ENCODE measurements at regions of chr12 and their contacts with region 1.

Region 1: DNA sequence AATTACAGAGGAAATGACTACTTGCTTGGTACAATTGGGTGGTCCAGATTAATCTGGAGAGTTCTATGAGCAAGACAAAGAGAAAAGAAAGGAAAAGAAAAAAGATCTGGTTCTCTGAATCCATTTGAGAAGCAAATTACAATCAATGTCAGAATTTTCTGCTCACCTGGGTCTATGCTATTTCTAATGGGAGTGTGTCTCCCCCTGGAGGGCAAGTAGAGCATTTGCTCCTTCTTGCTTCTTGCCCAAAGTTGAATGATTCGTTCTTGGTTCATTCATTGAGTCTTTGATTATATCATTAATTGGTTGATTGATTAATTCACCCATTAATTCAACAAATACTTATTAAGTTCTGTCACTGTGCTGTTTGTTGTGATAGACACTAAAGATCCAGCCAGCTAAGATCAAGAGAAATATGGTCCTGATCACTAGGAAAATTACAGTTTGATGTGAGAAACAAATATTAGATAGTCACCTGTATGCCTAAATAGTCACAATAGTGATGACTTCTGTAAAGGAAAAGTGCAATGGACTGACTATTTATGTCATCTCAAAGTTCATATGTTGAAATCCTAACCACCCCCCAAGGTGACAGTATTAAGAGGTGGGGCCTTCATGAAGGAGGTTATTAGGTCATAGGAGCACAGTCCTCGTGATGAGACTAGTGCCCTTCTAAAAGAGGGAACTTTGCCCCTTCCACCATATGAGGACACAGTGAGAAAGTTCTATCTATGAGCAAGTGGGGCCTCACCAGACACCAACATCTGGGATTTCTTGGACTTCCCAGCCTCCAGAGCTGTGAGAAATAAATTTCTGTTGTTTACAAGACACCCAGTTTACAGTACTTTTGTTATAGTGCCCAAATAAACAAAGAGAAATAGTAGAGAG is 8.0 kb upstream of the ASB8 start:
- DNase-seq: peak; percentile 73
- ATAC-seq: peak; percentile 79
- H3K4me3 Mint-ChIP-seq: no peak overlapping the region
- H3K27ac Mint-ChIP-seq: no peak overlapping the region
- H3K4me1 Mint-ChIP-seq: peaks cover 9% of the 10 kb centered on the region
- H3K27me3 Mint-ChIP-seq: peaks cover 21% of the 10 kb centered on the region

Region 2: GRCh38 chr12:47753034-47754001 is 412.0 kb before region 1 on chr12:
- CTCF ChIA-PET with region 1: no interaction called
- POLR2A ChIA-PET with region 1: no interaction called
- DNase-seq: no peak
- ATAC-seq: no peak
- H3K4me3 Mint-ChIP-seq: no peak overlapping the region
- H3K27ac Mint-ChIP-seq: no peak overlapping the region
- H3K4me1 Mint-ChIP-seq: peaks cover 28% of the 10 kb centered on the region
- H3K27me3 Mint-ChIP-seq: peaks cover 8% of the 10 kb centered on the region

Region 3: DNA sequence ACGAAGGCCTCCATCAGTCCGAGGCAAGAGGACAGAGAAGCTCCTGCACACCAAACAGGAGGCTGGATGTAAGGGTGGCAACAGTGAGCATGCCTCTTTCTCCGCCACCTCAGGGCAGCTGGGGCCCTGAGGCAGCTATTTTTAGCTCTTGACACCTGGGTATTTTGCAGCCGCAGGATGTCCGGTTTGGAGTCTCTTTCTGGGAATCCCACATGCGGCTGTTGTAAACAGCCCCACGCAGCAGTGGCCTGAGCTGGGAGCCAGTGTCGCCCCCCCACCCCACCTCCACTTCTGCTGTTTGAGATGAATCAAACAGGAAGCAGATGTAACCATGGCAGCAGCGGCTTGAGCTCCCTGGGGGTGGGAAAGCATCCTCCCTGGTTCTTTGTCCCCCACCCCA is 357.3 kb before region 1 on chr12:
- CTCF ChIA-PET with region 1: no interaction called
- POLR2A ChIA-PET with region 1: no interaction called
- DNase-seq: peak; percentile 95
- ATAC-seq: peak; percentile 60
- H3K4me3 Mint-ChIP-seq: peak overlapping the region; percentile 71
- H3K27ac Mint-ChIP-seq: peak overlapping the region; percentile 91
- H3K4me1 Mint-ChIP-seq: peaks cover 98% of the 10 kb centered on the region
- H3K27me3 Mint-ChIP-seq: no peaks in the 10 kb centered on the region

Region 4: DNA sequence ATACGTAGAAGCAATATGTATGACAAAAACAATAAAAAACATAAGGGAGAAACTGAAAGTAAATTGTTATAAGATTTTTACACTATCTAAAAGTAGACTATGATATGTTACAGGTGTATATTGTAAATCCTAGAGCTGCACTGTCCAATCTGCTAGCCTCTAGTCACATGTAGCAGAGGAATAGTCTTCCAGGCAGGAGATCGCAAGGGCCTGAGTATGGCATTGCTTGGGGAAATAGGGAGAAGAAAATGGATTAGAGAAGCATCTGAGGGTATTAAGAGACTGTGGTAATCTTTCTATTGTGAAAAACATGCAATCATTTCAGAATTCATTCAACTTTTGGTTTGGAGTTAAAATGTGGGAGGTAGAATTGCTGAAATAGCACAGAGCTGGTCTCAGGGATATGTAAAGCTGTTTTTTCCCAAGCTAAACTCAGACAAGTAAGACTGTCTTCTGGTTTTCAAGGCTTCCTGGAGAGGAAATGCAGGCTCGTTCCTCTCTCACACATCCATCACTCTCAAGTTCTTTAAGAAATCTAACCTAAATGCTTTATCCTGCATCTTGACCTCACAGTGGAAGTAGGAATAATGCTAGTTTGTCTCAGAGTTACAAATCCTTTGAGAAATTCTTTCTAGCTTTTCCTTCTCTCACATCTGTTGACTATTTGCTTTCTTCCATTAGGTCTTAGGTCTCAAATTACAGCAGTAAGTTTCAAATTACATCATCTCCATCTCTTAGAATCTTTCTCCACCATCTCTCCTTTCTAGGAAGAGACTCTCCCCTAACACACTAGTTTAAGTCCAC is 10.5 kb after region 1 on chr12:
- CTCF ChIA-PET with region 1: interaction called, 19 read pairs
- POLR2A ChIA-PET with region 1: no interaction called
- DNase-seq: no peak
- ATAC-seq: no peak
- H3K4me3 Mint-ChIP-seq: peak overlapping the region; percentile 13
- H3K27ac Mint-ChIP-seq: peak overlapping the region; percentile 32
- H3K4me1 Mint-ChIP-seq: peaks cover 11% of the 10 kb centered on the region
- H3K27me3 Mint-ChIP-seq: peaks cover 31% of the 10 kb centered on the region

Region 5: GRCh38 chr12:48183091-48183875 is 17.9 kb after region 1 on chr12 and contains the start of gene CCDC184:
- CTCF ChIA-PET with region 1: interaction called, 19 read pairs
- POLR2A ChIA-PET with region 1: no interaction called
- DNase-seq: peak; percentile 78
- ATAC-seq: peak; percentile 78
- H3K4me3 Mint-ChIP-seq: peak within 1 kb of the TSS; percentile 89
- H3K27ac Mint-ChIP-seq: peak within 1 kb of the TSS; percentile 41
- H3K4me1 Mint-ChIP-seq: peaks cover 13% of the 10 kb centered on the region
- H3K27me3 Mint-ChIP-seq: peaks cover 72% of the 10 kb centered on the region
- total RNA-seq, gene CCDC184: 1.4 to 1.5 TPM

Region 6: DNA sequence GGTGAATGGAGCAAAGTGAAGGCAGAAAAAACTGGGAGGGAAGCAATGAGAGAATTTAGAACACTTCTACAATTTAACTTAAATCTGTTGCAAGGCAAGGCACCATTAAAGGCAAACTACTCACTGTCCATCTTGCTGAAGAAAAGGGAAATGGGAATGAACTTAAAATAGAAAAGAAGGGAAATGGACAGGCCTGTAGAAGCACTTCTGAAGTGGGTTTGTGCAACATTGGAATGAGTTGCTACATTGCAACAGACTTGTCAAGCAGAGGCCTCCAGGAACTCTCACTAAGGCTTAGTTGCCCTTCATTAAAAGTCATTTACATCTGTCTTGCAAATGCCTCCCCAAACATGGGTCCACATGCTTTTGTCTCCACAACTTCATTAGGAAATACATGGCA is 51.4 kb after region 1 on chr12:
- CTCF ChIA-PET with region 1: no interaction called
- POLR2A ChIA-PET with region 1: no interaction called
- DNase-seq: no peak
- ATAC-seq: no peak
- H3K4me3 Mint-ChIP-seq: no peak overlapping the region
- H3K27ac Mint-ChIP-seq: no peak overlapping the region
- H3K4me1 Mint-ChIP-seq: peaks cover 4% of the 10 kb centered on the region
- H3K27me3 Mint-ChIP-seq: peaks cover 20% of the 10 kb centered on the region

Measured in activated CD8-positive, alpha-beta T cell treated with anti-CD3 and anti-CD28 coated beads, Interleukin-2, amount 10 ng/mL, durations not matched to agents 7 days and 5 days (primary cell).